ENCODE measurements at regions of chr19 and their contacts with region 1.

Region 1: GRCh38 chr19:14031719-14032480 is at the start of gene IL27RA:
- DNase-seq: peak; percentile 59 to 68
- ATAC-seq: peak; percentile 89 to 90
- H3K4me3 ChIP-seq: peak within 1 kb of the TSS; percentile 69
- H3K27ac ChIP-seq: peak within 1 kb of the TSS; percentile 88
- H3K4me1 ChIP-seq: peaks cover 4% of the 10 kb centered on the region; the same call in 1 of the 3 replicates
- CTCF ChIP-seq: peak; percentile 46; the same call in 2 of the 3 replicates
- EP300 ChIP-seq: no peak
- POLR2A ChIP-seq: peak; percentile 16; the same call in 1 of the 2 replicates
- RAD21 ChIP-seq: peak; percentile 39 to 43; a peak in 4 of 5 replicates
- polyA plus RNA-seq, gene IL27RA: 3.0 and 3.1 TPM in 2 replicates

Region 2: GRCh38 chr19:13880059-13881043 is 151.5 kb before region 1 on chr19:
- CTCF ChIA-PET with region 1: interaction called, 10 read pairs
- POLR2A ChIA-PET with region 1: no interaction called
- DNase-seq: peak; percentile 78 to 94
- ATAC-seq: peak; percentile 88 to 92
- H3K4me3 ChIP-seq: peak overlapping the region; percentile 33; the same call in 2 of the 3 replicates
- H3K27ac ChIP-seq: peak overlapping the region; percentile 96 to 100
- H3K4me1 ChIP-seq: peaks cover 13% of the 10 kb centered on the region
- CTCF ChIP-seq: peak; percentile 98
- EP300 ChIP-seq: no peak
- POLR2A ChIP-seq: no peak; the same call in 1 of the 2 replicates
- RAD21 ChIP-seq: peak; percentile 92 to 98

Region 3: GRCh38 chr19:13995017-13995728 is 36.7 kb before region 1 on chr19:
- CTCF ChIA-PET with region 1: no interaction called
- POLR2A ChIA-PET with region 1: no interaction called
- DNase-seq: no peak
- ATAC-seq: no peak
- H3K4me3 ChIP-seq: no peak overlapping the region
- H3K27ac ChIP-seq: no peak overlapping the region; a peak in 1 of 6 replicates
- H3K4me1 ChIP-seq: no peaks in the 10 kb centered on the region
- CTCF ChIP-seq: no peak
- EP300 ChIP-seq: no peak
- POLR2A ChIP-seq: no peak
- RAD21 ChIP-seq: no peak

Region 4: DNA sequence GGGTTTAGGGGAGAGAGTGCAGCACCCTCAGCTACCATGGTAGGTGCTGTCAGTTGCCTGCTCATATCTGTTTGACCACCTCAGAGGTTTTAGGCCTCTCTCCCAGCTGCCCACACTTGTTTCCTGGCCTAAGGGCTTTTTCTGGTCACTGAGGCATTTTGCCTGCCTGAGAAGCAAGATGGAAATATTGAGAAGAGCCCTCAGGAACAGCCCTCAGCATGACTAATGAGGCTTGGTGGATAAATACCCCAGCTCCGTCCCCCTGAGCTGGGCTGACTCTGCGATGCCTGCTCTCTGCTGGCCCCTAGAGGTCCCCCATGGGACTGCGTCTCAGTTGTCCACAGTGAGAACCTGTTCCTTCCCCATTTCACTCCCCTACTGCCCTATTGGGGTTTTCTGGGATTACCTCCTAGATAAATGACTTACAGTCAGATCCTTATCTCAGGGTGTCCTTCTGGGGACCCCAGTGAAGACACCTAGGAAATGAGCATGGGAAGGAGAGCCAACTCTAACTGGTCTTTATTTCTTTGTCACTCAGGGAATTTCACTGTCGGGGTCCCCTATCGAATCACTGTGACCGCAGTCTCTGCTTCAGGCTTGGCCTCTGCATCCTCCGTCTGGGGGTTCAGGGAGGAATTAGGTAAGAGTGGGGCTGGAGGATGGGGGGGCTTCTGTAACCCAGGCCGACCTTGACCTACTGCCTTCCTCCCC is 16.7 kb after region 1 on chr19:
- CTCF ChIA-PET with region 1: interaction called, 20 read pairs
- POLR2A ChIA-PET with region 1: no interaction called
- DNase-seq: peak; percentile 44 to 54
- ATAC-seq: peak in 1 of 2 experiments; percentile 69; a peak in 3 of 6 replicates
- H3K4me3 ChIP-seq: no peak overlapping the region
- H3K27ac ChIP-seq: no peak overlapping the region
- H3K4me1 ChIP-seq: no peaks in the 10 kb centered on the region
- CTCF ChIP-seq: peak; percentile 30
- EP300 ChIP-seq: no peak
- POLR2A ChIP-seq: no peak
- RAD21 ChIP-seq: peak in 1 of 2 experiments; percentile 24; a peak in 1 of 5 replicates

Measured in A549 (cell line).